ENCODE measurements at regions of chr12 and their contacts with region 1.

Region 1: DNA sequence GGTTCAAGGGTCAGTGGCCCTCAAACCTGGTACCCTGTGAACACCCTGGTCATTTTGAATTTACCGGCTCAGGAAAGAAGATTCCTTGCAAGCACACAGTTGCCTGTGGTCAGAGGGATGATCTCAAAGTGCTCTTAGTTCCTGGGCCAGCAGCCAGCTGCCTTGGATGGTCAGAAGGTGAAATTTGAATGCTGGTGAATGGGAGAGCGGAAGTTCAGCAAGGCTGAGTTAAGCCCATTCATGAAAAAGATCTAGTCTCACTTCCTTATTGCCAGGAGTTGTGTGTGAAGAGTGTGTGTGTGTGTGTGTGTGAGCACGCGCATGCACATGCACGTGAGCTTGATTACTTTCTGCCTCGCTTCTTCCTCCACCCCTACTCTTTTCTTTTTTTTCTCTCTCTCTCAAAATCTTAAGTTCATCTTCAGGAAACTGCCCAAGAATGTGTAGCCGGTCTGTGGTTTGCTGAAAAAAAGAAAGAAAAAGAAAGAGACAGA is 155.5 kb upstream of the CCND2 start:
- DNase-seq: peak; percentile 56
- CTCF ChIP-seq: no peak

Region 2: DNA sequence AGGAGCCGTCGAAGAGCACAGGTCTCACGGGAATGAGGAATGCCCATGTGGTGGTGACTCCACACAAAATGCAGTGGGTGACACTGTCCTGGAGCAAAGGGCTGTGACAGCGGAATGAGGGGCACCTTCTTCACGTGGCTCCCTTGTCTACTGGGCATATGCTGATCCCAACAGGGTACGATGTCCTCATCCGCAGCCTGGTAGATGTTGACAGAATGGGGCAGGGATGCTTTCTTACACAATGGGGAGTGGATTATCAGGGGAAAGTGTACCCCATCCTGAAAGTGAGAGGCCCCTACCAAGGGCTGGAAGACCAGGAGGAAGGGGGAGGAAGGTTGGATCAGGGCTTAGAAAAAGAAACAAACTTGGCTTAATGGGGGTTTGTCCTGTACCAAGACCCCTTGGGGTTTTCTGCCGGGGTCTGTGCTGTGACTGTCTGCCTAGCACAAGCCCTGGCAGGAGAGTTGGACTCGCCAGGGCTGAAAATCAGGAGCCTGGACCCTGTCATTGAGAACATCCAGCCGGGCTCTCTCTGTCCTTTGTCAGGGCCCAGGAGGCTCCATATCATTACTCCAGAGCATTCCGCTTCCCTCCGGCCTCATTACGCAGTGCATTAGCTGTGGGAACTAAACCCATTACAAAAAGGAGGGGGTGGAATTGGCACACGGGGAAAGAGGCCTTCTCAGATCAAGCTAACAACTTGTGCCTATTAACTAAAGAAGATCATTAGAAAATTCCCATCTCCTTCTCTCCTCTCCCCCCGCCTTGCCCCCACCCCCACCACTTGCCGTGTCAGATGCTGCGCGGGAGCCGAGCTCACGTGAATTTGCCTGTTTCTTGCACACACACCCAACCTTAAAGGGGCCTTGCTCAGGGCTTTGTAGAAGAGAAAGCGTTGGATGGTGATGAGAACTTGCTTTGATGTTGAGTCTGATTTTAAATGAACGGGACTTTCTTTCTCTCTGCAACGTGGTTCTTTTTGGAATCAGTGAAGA is 73.0 kb before region 1 on chr12:
- CTCF ChIA-PET with region 1: no interaction called
- POLR2A ChIA-PET with region 1: no interaction called
- DNase-seq: no peak
- CTCF ChIP-seq: no peak

Region 3: GRCh38 chr12:4080213-4080612 is 37.9 kb before region 1 on chr12:
- CTCF ChIA-PET with region 1: no interaction called
- POLR2A ChIA-PET with region 1: no interaction called
- DNase-seq: no peak
- CTCF ChIP-seq: no peak

Region 4: DNA sequence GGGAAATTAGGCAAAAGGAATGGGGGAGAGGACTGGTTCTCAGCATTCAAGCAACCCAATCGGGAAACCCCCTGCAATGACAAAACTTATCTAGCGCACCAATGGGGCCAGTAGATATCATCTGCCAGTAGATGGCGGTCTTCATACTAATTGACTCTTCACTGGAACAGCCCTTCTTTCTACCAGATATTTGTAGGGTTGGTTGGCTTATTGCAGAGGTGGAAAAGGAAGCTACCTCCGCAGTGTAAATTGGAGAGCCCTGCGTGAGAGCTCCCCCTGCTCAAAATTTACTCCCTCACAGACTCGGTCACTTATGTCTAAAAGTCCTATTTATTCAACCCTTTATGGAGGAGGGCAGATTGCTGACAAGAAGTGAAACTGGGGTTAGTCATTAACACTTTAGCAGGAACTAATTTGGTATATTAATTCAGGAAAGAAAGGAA is 10.6 kb before region 1 on chr12:
- CTCF ChIA-PET with region 1: interaction called, 36 read pairs
- POLR2A ChIA-PET with region 1: no interaction called
- DNase-seq: peak; percentile 84
- CTCF ChIP-seq: peak; percentile 67

Region 5: DNA sequence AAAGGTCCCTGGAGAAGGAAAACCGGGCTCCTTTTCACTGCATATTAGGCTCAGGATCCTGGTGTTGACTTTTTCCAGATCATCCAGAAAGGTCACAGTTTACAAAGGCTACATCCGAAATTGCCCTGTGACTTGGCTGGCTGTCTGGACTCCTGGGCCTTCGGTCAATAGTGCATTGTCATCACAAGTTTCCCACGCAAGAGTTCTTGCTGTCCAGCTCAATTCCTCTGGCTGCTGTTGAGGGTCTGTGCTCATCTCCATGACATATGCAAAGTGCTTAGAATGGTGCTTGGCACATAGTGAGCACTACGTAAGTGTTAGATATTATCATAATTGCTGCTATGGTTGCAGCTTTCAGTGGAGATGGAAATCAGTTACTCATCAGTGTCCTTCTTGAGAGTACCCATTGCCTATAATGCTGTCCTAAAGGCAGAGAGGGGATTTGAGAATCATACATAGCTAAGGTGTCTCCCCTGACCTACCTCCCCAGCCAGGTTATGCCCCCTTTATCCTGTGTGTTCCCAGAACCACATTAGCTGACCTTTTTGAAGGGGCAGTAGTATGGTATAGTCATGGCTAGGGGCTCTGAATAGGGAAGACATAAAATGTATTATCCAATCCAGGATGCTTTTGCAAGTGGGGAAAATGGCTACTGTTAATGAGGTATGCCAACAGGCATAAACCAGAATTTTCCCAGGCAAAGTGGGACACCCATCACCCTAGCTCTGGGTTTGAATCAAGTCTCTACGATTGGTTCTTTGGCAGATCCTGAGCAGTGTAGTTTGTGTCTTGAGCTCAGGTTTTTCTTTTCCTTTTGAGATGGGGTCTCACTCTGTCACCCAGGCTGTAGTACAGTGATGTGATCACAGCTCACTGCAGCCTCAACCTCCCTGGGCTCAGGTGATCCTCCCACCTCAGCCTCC is 23.5 kb after region 1 on chr12:
- CTCF ChIA-PET with region 1: interaction called, 11 read pairs
- POLR2A ChIA-PET with region 1: no interaction called
- DNase-seq: no peak
- CTCF ChIP-seq: no peak

Region 6: DNA sequence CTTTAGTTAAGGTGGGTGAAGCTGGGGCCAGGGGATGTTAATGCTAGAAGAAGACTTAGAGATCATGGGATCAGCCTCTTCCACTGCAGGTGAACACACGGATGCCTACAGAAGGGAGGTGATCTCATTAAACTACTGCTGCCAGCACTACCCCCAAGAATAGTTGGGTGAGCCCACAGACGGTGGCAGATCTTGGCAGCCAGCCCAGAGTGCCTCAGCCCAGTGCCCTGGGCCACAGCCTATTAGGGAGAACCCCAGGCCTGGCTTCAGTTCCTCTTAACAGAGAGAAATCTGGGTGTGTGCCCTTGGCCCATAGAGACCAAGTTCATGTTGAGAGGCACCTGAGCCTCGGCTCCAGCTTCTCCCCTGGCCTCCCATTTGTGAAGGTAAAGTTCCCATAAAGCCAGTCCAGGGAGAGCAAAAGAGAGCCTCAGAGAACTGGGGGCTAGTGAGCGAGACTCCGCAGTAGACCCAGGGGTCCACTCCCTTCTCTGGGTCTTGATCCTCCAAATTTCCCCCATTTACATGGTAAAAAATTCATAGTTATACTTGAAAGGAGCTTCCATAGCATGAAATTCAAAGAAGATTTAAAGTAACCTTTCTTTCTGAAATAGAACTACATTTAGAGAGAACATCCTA is 30.5 kb after region 1 on chr12:
- CTCF ChIA-PET with region 1: interaction called, 11 read pairs
- POLR2A ChIA-PET with region 1: no interaction called
- DNase-seq: peak; percentile 47
- CTCF ChIP-seq: no peak